GM10248 (cell line): ENCODE measurements at regions of chr19 and their contacts with region 1.

Region 1: DNA sequence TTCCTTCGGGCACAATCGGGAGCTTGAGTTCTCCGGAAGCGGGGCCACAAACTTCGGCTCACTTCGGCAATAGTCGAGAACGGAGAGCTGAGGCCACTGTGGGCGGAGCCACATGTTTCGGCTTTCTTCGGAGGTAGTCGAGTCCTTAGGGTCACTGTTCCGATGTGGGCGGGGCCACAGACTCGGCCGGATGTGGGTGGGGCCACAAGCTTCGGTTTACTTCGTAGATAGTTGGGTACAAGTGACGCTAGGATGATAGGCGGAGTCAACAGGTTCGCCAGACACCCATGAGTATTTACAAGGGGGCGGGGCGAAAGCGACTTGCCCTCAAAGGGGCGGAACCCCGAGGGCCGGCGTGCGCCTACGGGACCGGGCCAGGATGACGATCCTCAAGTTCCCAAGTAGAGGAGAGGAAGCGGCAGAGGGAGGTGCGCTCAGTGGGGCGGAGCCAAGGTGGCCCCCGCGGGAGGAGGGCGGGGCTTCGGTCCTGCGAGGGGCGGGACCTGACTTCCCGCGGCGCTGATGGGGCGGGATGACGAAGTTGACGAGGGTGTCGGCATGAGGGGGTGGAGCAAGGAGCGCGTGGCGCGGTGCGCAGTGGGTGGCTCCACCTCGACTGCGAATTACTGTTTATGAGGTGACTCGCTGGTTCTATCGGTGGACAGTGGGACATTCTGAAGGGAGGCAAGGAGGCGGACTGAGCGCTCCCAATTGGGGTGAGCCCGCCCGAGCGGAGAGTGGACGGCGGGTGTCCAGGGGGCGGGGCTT is 539 bp upstream of the MBOAT7 start:
- DNase-seq: peak; percentile 96
- CTCF ChIP-seq: no peak

Region 2: GRCh38 chr19:53961523-53962356 is 228.2 kb before region 1 on chr19:
- CTCF ChIA-PET with region 1: no interaction called
- POLR2A ChIA-PET with region 1: no interaction called
- DNase-seq: no peak
- CTCF ChIP-seq: no peak

Region 3: GRCh38 chr19:54137086-54137921 is 52.6 kb before region 1 on chr19 and contains the start of gene CNOT3:
- CTCF ChIA-PET with region 1: no interaction called
- POLR2A ChIA-PET with region 1: interaction called, 18 read pairs
- DNase-seq: peak; percentile 97
- CTCF ChIP-seq: no peak

Region 4: GRCh38 chr19:54168174-54168917 is 21.6 kb before region 1 on chr19:
- CTCF ChIA-PET with region 1: interaction called, 27 read pairs
- POLR2A ChIA-PET with region 1: interaction called, 4 read pairs
- DNase-seq: peak; percentile 90
- CTCF ChIP-seq: peak; percentile 90

Region 5: DNA sequence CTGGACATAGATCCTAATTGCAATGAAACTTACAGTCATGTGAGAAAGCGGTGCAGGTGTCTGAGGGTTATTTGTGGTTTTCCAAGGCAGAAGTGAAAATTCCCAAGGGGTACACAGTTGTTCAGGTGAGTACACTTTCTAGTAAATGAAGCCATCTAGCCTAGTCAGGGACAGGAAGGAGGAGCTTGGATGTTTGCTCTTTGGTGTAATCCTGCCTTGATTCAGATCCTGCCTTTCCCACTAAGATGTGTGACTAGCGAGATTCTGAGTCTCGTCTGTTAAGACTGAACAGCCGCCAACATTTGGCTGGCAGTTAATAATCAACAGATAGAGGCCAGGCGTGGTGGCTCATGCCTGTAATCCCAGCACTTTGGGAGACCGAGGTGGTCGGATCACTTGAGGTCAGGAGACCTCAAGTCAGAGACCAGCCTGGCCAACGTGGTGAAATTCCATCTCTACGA is 13.3 kb after region 1 on chr19:
- CTCF ChIA-PET with region 1: interaction called, 22 read pairs
- POLR2A ChIA-PET with region 1: interaction called, 102 read pairs
- DNase-seq: no peak
- CTCF ChIP-seq: no peak

Region 6: GRCh38 chr19:54209811-54210494 is 20.0 kb after region 1 on chr19:
- CTCF ChIA-PET with region 1: interaction called, 22 read pairs
- POLR2A ChIA-PET with region 1: interaction called, 30 read pairs
- DNase-seq: no peak
- CTCF ChIP-seq: no peak